CD4-positive, alpha-beta T cell (primary cell): ENCODE measurements at regions of chr6 and their contacts with region 1.

Region 1: GRCh38 chr6:35342258-35343091 is at the start of gene PPARD:
- DNase-seq: peak; percentile 94 to 98 (median 97)
- ATAC-seq: peak; percentile 97
- H3K4me3 ChIP-seq: peak within 1 kb of the TSS; percentile 87
- H3K4me3 Mint-ChIP-seq: peak within 1 kb of the TSS; percentile 98
- H3K27ac ChIP-seq: peak within 1 kb of the TSS; percentile 70 to 87
- H3K27ac Mint-ChIP-seq: peak within 1 kb of the TSS; percentile 89
- H3K4me1 ChIP-seq: peaks cover 51% of the 10 kb centered on the region
- H3K4me1 Mint-ChIP-seq: peaks cover 59% of the 10 kb centered on the region
- H3K27me3 ChIP-seq: no peaks in the 10 kb centered on the region
- H3K27me3 Mint-ChIP-seq: no peaks in the 10 kb centered on the region
- CTCF ChIP-seq: peak; percentile 96
- total RNA-seq, gene PPARD: 34.1 to 37.0 TPM

Region 2: GRCh38 chr6:35311390-35312075 is 30.9 kb before region 1 on chr6:
- CTCF ChIA-PET with region 1: interaction called, 13 read pairs
- POLR2A ChIA-PET with region 1: no interaction called
- intact Hi-C with region 1: no loop called
- DNase-seq: peak; percentile 35 to 81 (median 64)
- ATAC-seq: peak; percentile 84
- H3K4me3 ChIP-seq: peak overlapping the region; percentile 46
- H3K4me3 Mint-ChIP-seq: peak overlapping the region; percentile 84
- H3K27ac ChIP-seq: peak overlapping the region; percentile 95
- H3K27ac Mint-ChIP-seq: peak overlapping the region; percentile 99
- H3K4me1 ChIP-seq: peaks cover 67% of the 10 kb centered on the region
- H3K4me1 Mint-ChIP-seq: peaks cover 97% of the 10 kb centered on the region
- H3K27me3 ChIP-seq: no peaks in the 10 kb centered on the region
- H3K27me3 Mint-ChIP-seq: no peaks in the 10 kb centered on the region
- CTCF ChIP-seq: no peak

Region 3: GRCh38 chr6:35327349-35328027 is 15.0 kb before region 1 on chr6:
- CTCF ChIA-PET with region 1: interaction called, 12 read pairs
- POLR2A ChIA-PET with region 1: interaction called, 6 read pairs
- intact Hi-C with region 1: no loop called
- DNase-seq: peak; percentile 65 to 87 (median 75)
- ATAC-seq: peak; percentile 77
- H3K4me3 ChIP-seq: no peak overlapping the region
- H3K4me3 Mint-ChIP-seq: peak overlapping the region; percentile 28
- H3K27ac ChIP-seq: peak overlapping the region in 1 of 2 donors; percentile 30
- H3K27ac Mint-ChIP-seq: peak overlapping the region; percentile 86
- H3K4me1 ChIP-seq: peaks cover 23% of the 10 kb centered on the region
- H3K4me1 Mint-ChIP-seq: peaks cover 26% of the 10 kb centered on the region
- H3K27me3 ChIP-seq: no peaks in the 10 kb centered on the region
- H3K27me3 Mint-ChIP-seq: no peaks in the 10 kb centered on the region
- CTCF ChIP-seq: peak; percentile 78

Region 4: GRCh38 chr6:35391240-35391968 is 48.9 kb after region 1 on chr6:
- CTCF ChIA-PET with region 1: no interaction called
- POLR2A ChIA-PET with region 1: interaction called, 4 read pairs
- intact Hi-C with region 1: loop called in 1 of 2 experiments (anchors 10 kb)
- DNase-seq: peak in 4 of 14 experiments; percentile 20 to 60 (median 43)
- ATAC-seq: peak; percentile 77
- H3K4me3 ChIP-seq: no peak overlapping the region
- H3K4me3 Mint-ChIP-seq: peak overlapping the region; percentile 43
- H3K27ac ChIP-seq: no peak overlapping the region
- H3K27ac Mint-ChIP-seq: peak overlapping the region; percentile 89
- H3K4me1 ChIP-seq: peaks cover 47% of the 10 kb centered on the region
- H3K4me1 Mint-ChIP-seq: peaks cover 77% of the 10 kb centered on the region
- H3K27me3 ChIP-seq: no peaks in the 10 kb centered on the region
- H3K27me3 Mint-ChIP-seq: no peaks in the 10 kb centered on the region
- CTCF ChIP-seq: no peak

Region 5: GRCh38 chr6:35452186-35453090 is 110.0 kb after region 1 on chr6 and contains the start of gene FANCE:
- CTCF ChIA-PET with region 1: interaction called, 73 read pairs
- POLR2A ChIA-PET with region 1: interaction called, 28 read pairs
- intact Hi-C with region 1: loop called (anchors 1 kb)
- DNase-seq: peak; percentile 67 to 95 (median 84)
- ATAC-seq: peak; percentile 75
- H3K4me3 ChIP-seq: peak within 1 kb of the TSS; percentile 68
- H3K4me3 Mint-ChIP-seq: peak within 1 kb of the TSS; percentile 89
- H3K27ac ChIP-seq: peak within 1 kb of the TSS; percentile 27 to 55
- H3K27ac Mint-ChIP-seq: peak within 1 kb of the TSS; percentile 77
- H3K4me1 ChIP-seq: peaks cover 34% of the 10 kb centered on the region
- H3K4me1 Mint-ChIP-seq: peaks cover 43% of the 10 kb centered on the region
- H3K27me3 ChIP-seq: no peaks in the 10 kb centered on the region
- H3K27me3 Mint-ChIP-seq: no peaks in the 10 kb centered on the region
- CTCF ChIP-seq: no peak
- total RNA-seq, gene FANCE: 1.6 to 1.7 TPM

Region 6: GRCh38 chr6:35468181-35468979 is 125.9 kb after region 1 on chr6 and contains the start of gene RPL10A:
- CTCF ChIA-PET with region 1: interaction called, 10 read pairs
- POLR2A ChIA-PET with region 1: interaction called, 14 read pairs
- intact Hi-C with region 1: loop called (anchors 1 kb)
- DNase-seq: peak; percentile 91 to 98 (median 96)
- ATAC-seq: peak; percentile 83
- H3K4me3 ChIP-seq: peak within 1 kb of the TSS; percentile 98
- H3K4me3 Mint-ChIP-seq: peak within 1 kb of the TSS; percentile 99
- H3K27ac ChIP-seq: peak within 1 kb of the TSS; percentile 65 to 92
- H3K27ac Mint-ChIP-seq: peak within 1 kb of the TSS; percentile 100
- H3K4me1 ChIP-seq: peaks cover 49% of the 10 kb centered on the region
- H3K4me1 Mint-ChIP-seq: peaks cover 42% of the 10 kb centered on the region
- H3K27me3 ChIP-seq: no peaks in the 10 kb centered on the region
- H3K27me3 Mint-ChIP-seq: no peaks in the 10 kb centered on the region
- CTCF ChIP-seq: peak; percentile 91
- total RNA-seq, gene RPL10A: 2,453 to 2,464 TPM

Region 7: GRCh38 chr6:35552285-35552917 is 209.9 kb after region 1 on chr6:
- CTCF ChIA-PET with region 1: interaction called, 10 read pairs
- POLR2A ChIA-PET with region 1: no interaction called
- intact Hi-C with region 1: loop called in 1 of 2 experiments (anchors 5 kb)
- DNase-seq: peak; percentile 45 to 82 (median 58)
- ATAC-seq: peak; percentile 85
- H3K4me3 ChIP-seq: no peak overlapping the region
- H3K4me3 Mint-ChIP-seq: no peak overlapping the region
- H3K27ac ChIP-seq: no peak overlapping the region
- H3K27ac Mint-ChIP-seq: no peak overlapping the region
- H3K4me1 ChIP-seq: no peaks in the 10 kb centered on the region
- H3K4me1 Mint-ChIP-seq: peaks cover 8% of the 10 kb centered on the region
- H3K27me3 ChIP-seq: no peaks in the 10 kb centered on the region
- H3K27me3 Mint-ChIP-seq: no peaks in the 10 kb centered on the region
- CTCF ChIP-seq: peak; percentile 97